ENCODE measurements at regions of chr1 and their contacts with region 1.

Region 1: GRCh38 chr1:30718636-30719405 is 4.6 kb downstream of the MATN1 start:
- DNase-seq: peak in 13 of 14 experiments; percentile 71 to 98 (median 78)
- ATAC-seq: peak; percentile 62
- H3K4me3 ChIP-seq: peak overlapping the region; percentile 75
- H3K4me3 Mint-ChIP-seq: peak overlapping the region; percentile 95
- H3K27ac ChIP-seq: peak overlapping the region; percentile 100
- H3K27ac Mint-ChIP-seq: peak overlapping the region; percentile 92
- H3K4me1 ChIP-seq: peaks cover 51% of the 10 kb centered on the region
- H3K4me1 Mint-ChIP-seq: peaks cover 30% of the 10 kb centered on the region
- H3K27me3 ChIP-seq: no peaks in the 10 kb centered on the region
- H3K27me3 Mint-ChIP-seq: no peaks in the 10 kb centered on the region
- CTCF ChIP-seq: peak; percentile 97

Region 2: DNA sequence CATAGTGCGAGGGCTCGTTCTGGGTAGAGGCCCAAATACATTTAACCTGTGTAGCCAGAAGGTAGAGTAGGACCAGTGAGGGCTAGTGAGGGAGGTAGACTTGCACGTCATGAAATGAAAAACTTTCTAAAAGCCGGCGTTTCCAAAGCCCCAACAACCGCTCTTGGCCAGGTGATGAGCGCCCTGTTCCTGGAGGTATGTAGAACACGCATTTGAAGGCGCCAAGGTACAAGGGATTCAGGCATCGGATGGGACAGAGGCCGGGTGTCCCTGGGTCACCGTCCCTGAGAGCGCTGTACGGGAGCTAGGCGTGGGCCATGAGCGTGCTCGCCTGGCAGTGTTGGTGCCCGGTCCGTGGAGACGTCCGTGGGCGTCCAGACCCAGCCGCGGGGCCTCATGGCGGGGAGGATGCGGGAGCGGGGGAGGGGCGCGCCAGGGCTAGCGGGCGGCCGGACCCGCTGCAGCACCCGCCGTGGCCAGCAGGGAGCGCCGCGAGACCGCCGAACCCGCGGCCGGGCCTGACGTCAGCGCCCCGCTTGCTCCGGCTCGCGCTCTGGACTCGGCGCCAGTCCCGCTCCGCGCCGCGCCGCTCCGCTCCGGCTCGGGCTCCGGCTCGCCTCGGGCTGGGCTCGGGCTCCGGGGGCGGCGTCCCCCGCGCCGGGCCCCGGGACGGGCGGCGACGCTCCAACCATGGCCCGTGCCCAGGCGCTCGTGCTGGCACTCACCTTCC is 1482.7 kb before region 1 on chr1 and contains the start of gene PTPRU:
- CTCF ChIA-PET with region 1: no interaction called
- POLR2A ChIA-PET with region 1: no interaction called
- intact Hi-C with region 1: loop called in 1 of 2 experiments (anchors 5 kb)
- DNase-seq: peak; percentile 39 to 89 (median 77)
- ATAC-seq: peak; percentile 88
- H3K4me3 ChIP-seq: peak within 1 kb of the TSS; percentile 39
- H3K4me3 Mint-ChIP-seq: peak within 1 kb of the TSS; percentile 82
- H3K27ac ChIP-seq: no peak within 1 kb of the TSS
- H3K27ac Mint-ChIP-seq: peak within 1 kb of the TSS; percentile 25
- H3K4me1 ChIP-seq: peaks cover 26% of the 10 kb centered on the region
- H3K4me1 Mint-ChIP-seq: peaks cover 28% of the 10 kb centered on the region
- H3K27me3 ChIP-seq: peaks cover 34 to 48% of the 10 kb centered on the region in 2 experiments
- H3K27me3 Mint-ChIP-seq: peaks cover 57% of the 10 kb centered on the region
- CTCF ChIP-seq: peak; percentile 62
- total RNA-seq, gene PTPRU: 0.16 to 0.56 TPM

Region 3: DNA sequence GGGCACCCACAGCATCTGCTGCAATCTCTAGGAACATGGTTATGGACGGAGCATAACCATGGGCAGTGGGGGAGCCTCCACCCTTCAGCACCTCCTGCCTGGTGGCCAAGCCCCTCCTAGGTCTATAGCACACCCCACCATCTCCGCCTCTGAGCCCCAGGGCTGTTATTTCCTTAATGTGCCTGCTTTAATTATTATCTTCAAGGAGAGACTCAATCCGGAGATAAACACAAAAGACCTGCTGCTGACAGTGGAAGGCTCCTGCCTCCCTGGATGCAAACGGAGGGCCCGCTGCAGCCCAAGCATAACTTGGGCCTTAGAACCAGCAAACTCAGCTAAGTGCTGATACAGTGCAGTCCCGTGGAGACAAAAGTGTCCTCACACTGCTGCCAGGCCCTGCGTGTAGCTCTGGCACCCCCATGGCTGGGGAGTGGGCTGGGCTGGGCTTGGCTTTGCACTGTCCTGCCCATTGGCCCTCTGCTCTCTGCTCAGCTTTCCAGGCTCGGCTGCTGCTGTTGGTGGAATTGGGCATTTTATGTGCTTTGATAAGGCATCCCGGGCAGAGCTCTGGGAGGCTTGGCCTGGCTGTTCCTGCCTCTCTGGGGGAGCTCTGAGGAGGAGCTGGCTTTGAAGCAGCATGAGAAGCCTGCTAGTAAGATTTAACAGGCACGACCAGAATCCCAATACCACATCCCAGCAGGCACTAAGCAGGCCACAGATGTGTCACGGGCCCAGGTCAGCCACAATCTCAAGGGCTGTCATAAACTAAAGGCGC is 862.3 kb before region 1 on chr1:
- CTCF ChIA-PET with region 1: no interaction called
- POLR2A ChIA-PET with region 1: no interaction called
- intact Hi-C with region 1: no loop called
- DNase-seq: no peak
- ATAC-seq: no peak
- H3K4me3 ChIP-seq: no peak overlapping the region
- H3K4me3 Mint-ChIP-seq: no peak overlapping the region
- H3K27ac ChIP-seq: no peak overlapping the region
- H3K27ac Mint-ChIP-seq: no peak overlapping the region
- H3K4me1 ChIP-seq: no peaks in the 10 kb centered on the region
- H3K4me1 Mint-ChIP-seq: no peaks in the 10 kb centered on the region
- H3K27me3 ChIP-seq: peaks cover 9 to 13% of the 10 kb centered on the region in 2 experiments
- H3K27me3 Mint-ChIP-seq: peaks cover 44% of the 10 kb centered on the region
- CTCF ChIP-seq: no peak

Region 4: GRCh38 chr1:30743584-30744059 is 24.8 kb after region 1 on chr1:
- CTCF ChIA-PET with region 1: interaction called, 15 read pairs
- POLR2A ChIA-PET with region 1: interaction called, 87 read pairs
- intact Hi-C with region 1: loop called (anchors 2 kb)
- DNase-seq: peak; percentile 50 to 93 (median 64)
- ATAC-seq: peak; percentile 81
- H3K4me3 ChIP-seq: peak overlapping the region; percentile 42
- H3K4me3 Mint-ChIP-seq: peak overlapping the region; percentile 83
- H3K27ac ChIP-seq: peak overlapping the region; percentile 95 to 97
- H3K27ac Mint-ChIP-seq: peak overlapping the region; percentile 96
- H3K4me1 ChIP-seq: peaks cover 99% of the 10 kb centered on the region
- H3K4me1 Mint-ChIP-seq: peaks cover 100% of the 10 kb centered on the region
- H3K27me3 ChIP-seq: no peaks in the 10 kb centered on the region
- H3K27me3 Mint-ChIP-seq: no peaks in the 10 kb centered on the region
- CTCF ChIP-seq: no peak

Region 5: GRCh38 chr1:30779294-30780071 is 60.7 kb after region 1 on chr1:
- CTCF ChIA-PET with region 1: interaction called, 87 read pairs
- POLR2A ChIA-PET with region 1: interaction called, 60 read pairs
- intact Hi-C with region 1: loop called (anchors 1 kb)
- DNase-seq: peak; percentile 78 to 98 (median 92)
- ATAC-seq: peak; percentile 75
- H3K4me3 ChIP-seq: no peak overlapping the region
- H3K4me3 Mint-ChIP-seq: no peak overlapping the region
- H3K27ac ChIP-seq: no peak overlapping the region
- H3K27ac Mint-ChIP-seq: peak overlapping the region; percentile 3
- H3K4me1 ChIP-seq: peaks cover 25% of the 10 kb centered on the region
- H3K4me1 Mint-ChIP-seq: peaks cover 16% of the 10 kb centered on the region
- H3K27me3 ChIP-seq: no peaks in the 10 kb centered on the region
- H3K27me3 Mint-ChIP-seq: no peaks in the 10 kb centered on the region
- CTCF ChIP-seq: peak; percentile 92

Region 6: DNA sequence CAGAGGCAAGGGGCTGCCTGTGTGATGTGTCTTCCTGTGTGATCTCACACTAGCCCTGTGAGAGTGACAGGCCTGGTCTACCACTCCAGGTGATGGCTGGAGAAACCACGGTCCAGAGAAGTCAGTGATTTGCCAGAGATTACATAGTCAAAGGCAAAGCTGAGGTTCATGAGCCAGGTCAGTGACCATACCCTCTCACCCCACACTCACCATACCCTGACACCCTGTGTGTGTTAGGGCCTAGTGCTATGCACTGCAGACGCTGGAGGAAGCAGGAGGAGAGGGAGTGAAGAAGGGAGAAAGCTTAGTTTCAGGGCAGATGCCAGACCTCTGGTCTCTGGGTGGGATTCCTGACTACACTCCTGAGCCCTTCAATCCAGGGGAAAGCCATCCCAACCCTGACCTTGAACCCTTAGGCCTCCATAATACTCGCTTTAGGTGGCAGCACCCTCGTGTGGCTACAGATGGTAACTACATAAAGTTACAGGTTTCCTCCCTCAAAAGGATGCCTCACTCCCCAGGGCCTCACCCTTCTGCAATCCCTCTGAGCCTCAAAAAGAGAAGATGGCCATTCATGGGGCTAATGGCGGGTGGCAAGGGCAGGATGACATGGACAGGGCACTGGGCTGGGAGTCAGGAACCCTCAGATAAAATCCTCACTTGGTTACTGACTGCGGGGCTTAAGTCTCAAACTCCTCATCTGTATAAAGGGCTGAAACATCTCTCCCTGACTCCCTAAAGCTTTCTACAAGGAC is 210.5 kb after region 1 on chr1:
- CTCF ChIA-PET with region 1: interaction called, 10 read pairs
- POLR2A ChIA-PET with region 1: no interaction called
- intact Hi-C with region 1: loop called (anchors 1 to 5 kb)
- DNase-seq: peak in 12 of 14 experiments; percentile 20 to 66 (median 35)
- ATAC-seq: peak; percentile 75
- H3K4me3 ChIP-seq: no peak overlapping the region
- H3K4me3 Mint-ChIP-seq: no peak overlapping the region
- H3K27ac ChIP-seq: no peak overlapping the region
- H3K27ac Mint-ChIP-seq: no peak overlapping the region
- H3K4me1 ChIP-seq: no peaks in the 10 kb centered on the region
- H3K4me1 Mint-ChIP-seq: no peaks in the 10 kb centered on the region
- H3K27me3 ChIP-seq: peaks cover 0 to 2% of the 10 kb centered on the region in 2 experiments
- H3K27me3 Mint-ChIP-seq: no peaks in the 10 kb centered on the region
- CTCF ChIP-seq: peak; percentile 78

Region 7: DNA sequence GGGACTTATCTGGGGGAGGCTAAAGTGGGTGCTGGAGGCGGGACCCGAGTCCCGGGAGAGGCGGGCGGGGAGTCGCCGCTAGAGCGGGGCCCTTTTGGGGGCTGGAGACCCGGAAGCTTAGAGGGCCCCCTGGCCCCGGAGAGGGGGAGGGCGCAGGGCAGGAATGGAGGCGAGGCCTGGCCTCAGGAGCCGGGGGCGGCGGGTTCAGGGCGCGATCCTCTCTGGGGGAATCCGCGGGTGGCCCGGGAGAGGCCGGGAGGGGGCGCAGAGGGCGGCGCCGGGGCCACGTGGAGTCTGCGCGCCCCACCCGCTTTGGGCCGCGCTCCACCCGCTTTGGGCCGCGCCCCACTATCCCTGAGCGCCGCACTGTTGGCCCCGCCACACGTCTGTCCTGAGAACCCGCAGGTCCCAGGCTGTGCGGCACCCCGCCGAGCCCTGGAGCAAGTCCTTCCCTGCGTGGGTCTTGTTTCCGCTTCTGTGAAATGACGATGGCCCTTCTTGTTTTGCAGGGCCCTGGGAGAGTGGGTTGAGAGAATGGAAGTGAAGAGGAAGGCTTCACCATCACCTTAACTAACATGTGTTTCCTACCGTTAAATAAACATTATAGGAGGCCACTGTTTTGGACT is 436.5 kb after region 1 on chr1:
- CTCF ChIA-PET with region 1: no interaction called
- POLR2A ChIA-PET with region 1: no interaction called
- intact Hi-C with region 1: loop called in 1 of 2 experiments (anchors 10 kb)
- DNase-seq: peak; percentile 14 to 78 (median 32)
- ATAC-seq: peak; percentile 81
- H3K4me3 ChIP-seq: peak overlapping the region; percentile 66
- H3K4me3 Mint-ChIP-seq: peak overlapping the region; percentile 89
- H3K27ac ChIP-seq: no peak overlapping the region
- H3K27ac Mint-ChIP-seq: peak overlapping the region; percentile 40
- H3K4me1 ChIP-seq: peaks cover 14% of the 10 kb centered on the region
- H3K4me1 Mint-ChIP-seq: peaks cover 12% of the 10 kb centered on the region
- H3K27me3 ChIP-seq: no peaks in the 10 kb centered on the region
- H3K27me3 Mint-ChIP-seq: no peaks in the 10 kb centered on the region
- CTCF ChIP-seq: peak; percentile 35

Region 8: GRCh38 chr1:31644560-31645273 is 925.9 kb after region 1 on chr1 and contains the start of gene PEF1:
- CTCF ChIA-PET with region 1: no interaction called
- POLR2A ChIA-PET with region 1: no interaction called
- intact Hi-C with region 1: loop called in 1 of 2 experiments (anchors 5 kb)
- DNase-seq: peak; percentile 98 to 100 (median 99)
- ATAC-seq: peak; percentile 89
- H3K4me3 ChIP-seq: peak within 1 kb of the TSS; percentile 85
- H3K4me3 Mint-ChIP-seq: peak within 1 kb of the TSS; percentile 99
- H3K27ac ChIP-seq: peak within 1 kb of the TSS; percentile 99
- H3K27ac Mint-ChIP-seq: peak within 1 kb of the TSS; percentile 100
- H3K4me1 ChIP-seq: peaks cover 52% of the 10 kb centered on the region
- H3K4me1 Mint-ChIP-seq: peaks cover 29% of the 10 kb centered on the region
- H3K27me3 ChIP-seq: no peaks in the 10 kb centered on the region
- H3K27me3 Mint-ChIP-seq: no peaks in the 10 kb centered on the region
- CTCF ChIP-seq: no peak
- total RNA-seq, gene PEF1: 42.3 to 45.9 TPM

Measured in CD4-positive, alpha-beta T cell (primary cell).